Activated naive CD4-positive, alpha-beta T cell treated with anti-CD3 and anti-CD28 coated beads for 36 hours (primary cell): ENCODE measurements at regions of chr17 and their contacts with region 1.

Region 1: GRCh38 chr17:67602956-67603355 is 114.8 kb upstream of the NOL11 start:
- DNase-seq: peak; percentile 72
- H3K4me3 Mint-ChIP-seq: no peak overlapping the region
- H3K27ac Mint-ChIP-seq: no peak overlapping the region
- H3K4me1 Mint-ChIP-seq: peaks cover 14% of the 10 kb centered on the region
- H3K27me3 Mint-ChIP-seq: no peaks in the 10 kb centered on the region

Region 2: DNA sequence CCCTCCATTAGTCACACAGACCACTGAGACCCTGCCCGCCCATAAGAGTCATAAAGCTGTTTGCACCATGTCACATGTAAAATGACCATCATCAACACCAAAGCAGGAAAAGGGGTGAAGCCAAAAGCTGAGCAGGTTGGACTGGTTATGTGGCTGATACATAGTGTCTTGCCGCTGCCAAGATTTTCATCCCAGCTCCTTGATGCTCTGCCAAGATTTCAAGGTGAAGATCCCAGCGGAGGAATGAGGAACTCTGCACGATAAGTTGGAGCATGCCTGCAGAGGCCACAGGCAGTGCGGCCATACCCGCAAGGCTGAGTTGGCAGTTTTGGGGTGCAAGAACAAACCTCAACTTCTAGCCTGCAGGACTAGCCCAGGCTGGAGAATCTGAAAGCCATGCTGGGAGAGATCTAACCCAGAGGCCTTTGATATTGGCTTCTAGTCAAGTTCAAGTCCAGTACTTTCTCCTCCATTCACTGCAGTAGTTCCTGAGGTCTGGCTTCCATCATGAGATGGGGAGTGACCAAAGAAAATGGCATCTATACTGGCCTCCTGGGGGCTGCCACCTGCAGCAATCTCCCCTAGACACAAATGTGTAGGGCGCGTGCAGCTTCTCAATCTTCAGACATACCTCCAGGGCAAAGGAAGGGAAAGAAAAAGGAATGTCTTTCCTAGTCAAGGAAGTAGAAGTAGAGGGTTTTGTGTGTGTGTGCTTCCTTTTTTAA is 35.1 kb after region 1 on chr17:
- CTCF ChIA-PET with region 1: no interaction called
- intact Hi-C with region 1: no loop called
- DNase-seq: no peak
- H3K4me3 Mint-ChIP-seq: no peak overlapping the region
- H3K27ac Mint-ChIP-seq: no peak overlapping the region
- H3K4me1 Mint-ChIP-seq: no peaks in the 10 kb centered on the region
- H3K27me3 Mint-ChIP-seq: no peaks in the 10 kb centered on the region

Region 3: DNA sequence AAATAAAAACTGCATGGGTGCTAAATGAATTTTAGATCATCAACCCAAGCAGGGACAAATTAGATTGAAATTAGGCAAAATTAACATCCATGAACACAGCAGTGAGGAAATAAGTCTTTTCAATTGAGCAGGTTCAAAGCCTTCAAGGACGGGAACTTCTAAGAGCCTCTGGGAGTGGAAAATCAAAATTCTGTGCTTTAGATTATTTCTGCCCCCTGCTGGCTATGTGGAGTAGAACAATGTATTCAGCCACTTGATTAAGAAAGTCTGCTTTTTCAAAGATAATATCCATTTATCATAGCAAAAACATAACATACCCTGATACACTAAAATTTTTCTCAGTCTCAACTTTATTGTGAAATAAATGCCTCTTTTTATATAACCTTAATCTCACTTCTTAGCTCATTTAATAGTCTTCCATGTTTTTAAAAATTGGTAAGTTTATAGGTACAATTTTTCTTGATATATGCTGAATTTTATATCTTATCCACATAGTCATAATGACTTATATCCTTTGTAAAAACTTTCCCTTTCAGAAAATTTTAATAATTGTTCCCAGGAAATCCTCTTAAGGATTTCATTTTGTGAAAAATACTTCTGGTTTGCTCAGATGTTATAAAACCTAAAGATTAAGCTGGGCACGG is 86.7 kb after region 1 on chr17:
- CTCF ChIA-PET with region 1: no interaction called
- intact Hi-C with region 1: loop called (anchors 2 kb)
- DNase-seq: peak; percentile 71
- H3K4me3 Mint-ChIP-seq: no peak overlapping the region
- H3K27ac Mint-ChIP-seq: no peak overlapping the region
- H3K4me1 Mint-ChIP-seq: peaks cover 4% of the 10 kb centered on the region
- H3K27me3 Mint-ChIP-seq: no peaks in the 10 kb centered on the region